ENCODE measurements at regions of chr4 and their contacts with region 1.

Region 1: GRCh38 chr4:66820681-66821080 is 724.6 kb downstream of the CENPC start:
- DNase-seq: no peak

Region 2: DNA sequence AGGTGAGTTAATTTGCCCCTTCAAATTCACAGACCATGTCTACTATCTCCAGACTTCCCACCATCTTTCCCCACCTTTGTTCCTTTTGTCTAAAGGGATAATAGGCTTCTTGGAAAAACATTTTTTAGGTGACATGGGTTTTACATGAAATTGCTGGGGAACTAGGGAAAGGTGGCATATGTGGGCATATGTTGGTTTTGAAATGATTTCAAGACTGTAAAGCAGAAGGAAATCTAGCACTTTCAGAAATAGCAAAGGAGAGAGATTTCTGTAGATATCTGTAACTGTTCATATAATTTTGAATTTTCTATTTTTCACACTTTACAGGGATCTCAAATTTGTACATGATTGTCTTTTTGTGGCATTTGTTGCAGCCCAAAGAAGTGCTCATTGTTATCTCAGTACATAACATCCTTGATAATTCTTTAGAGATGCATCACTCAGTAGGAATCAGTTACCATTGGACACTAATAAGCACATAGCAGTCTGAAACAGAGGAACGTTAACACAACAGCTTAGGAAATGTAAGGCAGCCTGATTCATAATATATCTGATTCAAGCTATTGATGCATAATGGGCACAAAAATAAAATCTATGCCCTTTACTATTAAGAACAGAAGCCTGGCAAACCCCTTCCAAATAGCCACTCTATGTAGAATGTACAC is 65.0 kb after region 1 on chr4:
- intact Hi-C with region 1: loop called (anchors 10 kb)
- DNase-seq: no peak